Psoas muscle (tissue), 8 donors: ENCODE measurements at regions of chr1 and their contacts with region 1.

Region 1: GRCh38 chr1:226702957-226703831 is 35.9 kb downstream of the ITPKB start:
- DNase-seq: peak; percentile 81 to 88
- ATAC-seq: peak; percentile 82 to 88 (median 87)
- H3K4me3 ChIP-seq: peak overlapping the region; percentile 84
- H3K27ac ChIP-seq: peak overlapping the region; percentile 99
- H3K4me1 ChIP-seq: peaks cover 42% of the 10 kb centered on the region
- H3K27me3 ChIP-seq: no peaks in the 10 kb centered on the region
- CTCF ChIP-seq: no peak

Region 2: DNA sequence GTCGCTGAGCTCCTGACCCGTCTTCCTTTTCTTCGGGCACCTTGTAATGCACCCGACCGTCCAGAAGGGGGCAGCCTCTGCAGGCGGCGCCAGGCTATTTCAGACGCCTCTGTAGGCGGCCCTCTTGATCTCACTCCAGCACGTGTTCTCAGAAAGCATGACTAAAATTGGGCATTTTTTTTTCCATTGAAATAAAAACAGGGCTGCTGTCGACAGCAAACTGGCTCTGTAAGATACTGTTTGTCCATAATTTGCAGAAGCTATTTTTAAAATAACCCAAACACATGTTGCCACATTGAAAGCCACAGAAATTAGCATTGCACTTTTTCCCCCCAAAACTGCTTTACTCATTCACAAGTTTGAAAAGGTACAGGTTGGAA is 76.6 kb before region 1 on chr1:
- intact Hi-C with region 1: no loop called
- DNase-seq: peak; percentile 73 to 88
- ATAC-seq: peak; percentile 85 to 94 (median 90)
- H3K4me3 ChIP-seq: no peak overlapping the region
- H3K27ac ChIP-seq: no peak overlapping the region
- H3K4me1 ChIP-seq: peaks cover 5% of the 10 kb centered on the region
- H3K27me3 ChIP-seq: no peaks in the 10 kb centered on the region
- CTCF ChIP-seq: peak; percentile 92

Region 3: DNA sequence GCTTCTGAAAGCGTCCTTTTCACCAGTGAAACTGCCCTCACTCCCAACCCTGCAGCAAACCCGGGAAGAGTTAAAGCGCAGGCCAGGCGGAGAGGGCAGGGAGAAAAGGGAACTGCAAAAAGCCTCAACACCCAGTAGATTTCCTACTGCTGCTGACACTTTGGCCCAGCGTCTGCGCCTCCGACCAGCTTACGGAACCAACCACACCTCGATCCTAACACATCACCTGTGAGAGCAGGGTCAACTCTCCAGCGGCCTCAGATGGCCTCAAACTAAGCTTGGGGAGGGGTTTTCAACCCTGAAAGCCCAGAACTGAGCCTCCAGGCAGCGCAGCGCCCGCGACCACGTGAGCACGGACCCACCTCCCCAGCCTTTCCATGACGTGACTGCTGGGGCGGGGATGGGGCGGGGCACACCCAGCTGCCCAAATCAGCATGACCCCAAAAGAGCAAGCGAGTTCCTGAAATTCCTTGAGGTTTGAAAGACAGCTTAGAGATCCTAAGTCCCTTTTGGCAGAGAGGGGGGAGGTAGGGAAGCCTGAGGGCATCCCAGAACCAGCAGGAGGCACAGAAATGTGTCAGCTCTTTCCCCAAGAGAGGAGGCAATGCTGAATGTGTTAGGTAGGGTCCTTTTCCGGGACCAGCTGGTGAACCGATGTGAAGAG is 23.2 kb before region 1 on chr1:
- intact Hi-C with region 1: loop called in 1 of 2 experiments (anchors 2 kb)
- DNase-seq: peak; percentile 85 to 89
- ATAC-seq: peak; percentile 67 to 76 (median 70)
- H3K4me3 ChIP-seq: peak overlapping the region; percentile 64
- H3K27ac ChIP-seq: peak overlapping the region; percentile 85
- H3K4me1 ChIP-seq: peaks cover 78% of the 10 kb centered on the region
- H3K27me3 ChIP-seq: no peaks in the 10 kb centered on the region
- CTCF ChIP-seq: no peak

Region 4: GRCh38 chr1:226736908-226737818 is 34.0 kb after region 1 on chr1:
- intact Hi-C with region 1: loop called (anchors 5 kb)
- DNase-seq: peak; percentile 49 to 79
- ATAC-seq: peak; percentile 57 to 73 (median 64)
- H3K4me3 ChIP-seq: peak overlapping the region; percentile 94
- H3K27ac ChIP-seq: peak overlapping the region; percentile 87
- H3K4me1 ChIP-seq: peaks cover 23% of the 10 kb centered on the region
- H3K27me3 ChIP-seq: no peaks in the 10 kb centered on the region
- CTCF ChIP-seq: peak; percentile 16

Region 5: GRCh38 chr1:227185291-227185690 is 482.1 kb after region 1 on chr1:
- intact Hi-C with region 1: no loop called
- DNase-seq: no peak
- ATAC-seq: no peak
- H3K4me3 ChIP-seq: no peak overlapping the region
- H3K27ac ChIP-seq: no peak overlapping the region
- H3K4me1 ChIP-seq: no peaks in the 10 kb centered on the region
- H3K27me3 ChIP-seq: no peaks in the 10 kb centered on the region
- CTCF ChIP-seq: no peak